Activated CD4-positive, alpha-beta memory T cell treated with anti-CD3 and anti-CD28 coated beads for 36 hours (primary cell): ENCODE measurements at regions of chr3 and their contacts with region 1.

Region 1: DNA sequence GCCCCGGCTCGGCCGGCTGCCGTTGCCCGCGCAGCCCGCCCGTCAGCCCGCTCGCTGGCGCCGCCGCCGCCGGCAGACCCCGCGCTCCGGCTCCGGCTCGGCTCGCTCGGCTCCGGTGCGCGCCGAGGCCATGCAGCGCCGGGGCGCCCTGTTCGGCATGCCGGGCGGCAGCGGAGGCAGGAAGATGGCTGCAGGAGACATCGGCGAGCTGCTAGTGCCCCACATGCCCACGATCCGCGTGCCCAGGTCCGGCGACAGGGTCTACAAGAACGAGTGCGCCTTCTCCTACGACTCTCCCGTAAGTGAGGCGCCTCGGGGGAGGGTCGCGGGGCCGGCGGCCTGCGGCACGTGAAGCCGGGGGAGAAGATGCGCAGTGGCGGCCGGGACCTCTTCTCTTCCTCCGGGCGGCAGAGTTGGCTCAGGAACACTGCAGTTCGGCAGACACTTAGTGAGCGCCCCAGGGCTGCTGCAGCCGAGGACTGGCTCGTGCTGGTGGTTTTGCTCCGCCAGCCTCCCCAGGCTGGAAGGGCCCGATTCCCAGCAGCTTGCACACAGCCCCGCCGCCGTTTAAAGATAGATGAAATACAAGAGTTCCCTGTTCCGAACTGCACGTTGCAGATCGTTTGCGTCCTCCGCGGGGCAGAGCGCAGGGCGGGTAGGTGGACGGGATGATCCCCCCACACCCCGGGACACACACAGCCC is 407 bp downstream of the USP13 start:
- DNase-seq: peak; percentile 73
- H3K4me3 Mint-ChIP-seq: peak overlapping the region; percentile 90
- H3K27ac Mint-ChIP-seq: peak overlapping the region; percentile 71
- H3K4me1 Mint-ChIP-seq: peaks cover 27% of the 10 kb centered on the region
- H3K27me3 Mint-ChIP-seq: peaks cover 1% of the 10 kb centered on the region

Region 2: GRCh38 chr3:179604321-179605078 is 48.7 kb before region 1 on chr3 and contains the starts of genes MRPL47 and NDUFB5:
- CTCF ChIA-PET with region 1: interaction called, 7 read pairs
- POLR2A ChIA-PET with region 1: interaction called, 4 read pairs
- intact Hi-C with region 1: loop called (anchors 1 kb)
- DNase-seq: peak; percentile 96
- H3K4me3 Mint-ChIP-seq: peak within 1 kb of the TSS; percentile 99
- H3K27ac Mint-ChIP-seq: peak within 1 kb of the TSS; percentile 98
- H3K4me1 Mint-ChIP-seq: peaks cover 40% of the 10 kb centered on the region
- H3K27me3 Mint-ChIP-seq: no peaks in the 10 kb centered on the region
- total RNA-seq, gene MRPL47: 51.4 to 54.0 TPM
- total RNA-seq, gene NDUFB5: 133 to 147 TPM

Region 3: DNA sequence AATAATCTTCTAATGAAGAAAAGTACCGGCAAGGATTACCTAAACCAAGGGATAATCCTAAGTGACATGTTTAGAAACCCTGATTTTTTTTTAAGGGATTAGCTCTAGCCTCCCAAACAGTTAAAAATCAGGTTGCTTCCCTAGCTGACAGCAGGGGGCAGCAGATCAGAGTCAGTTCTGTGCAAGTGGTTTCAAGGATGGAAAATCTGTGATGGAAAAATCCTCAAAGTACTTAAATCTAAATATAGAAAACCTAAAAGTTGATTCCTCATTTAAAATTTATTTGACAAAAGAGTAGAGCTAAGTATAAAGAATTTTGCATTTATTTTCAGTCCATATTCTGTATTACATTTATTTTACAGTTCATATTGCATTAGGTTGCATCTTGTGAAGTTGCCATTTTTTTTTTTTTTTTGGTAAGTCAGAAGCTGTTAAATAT is 275.9 kb after region 1 on chr3:
- CTCF ChIA-PET with region 1: no interaction called
- POLR2A ChIA-PET with region 1: no interaction called
- intact Hi-C with region 1: loop called (anchors 10 kb)
- DNase-seq: peak; percentile 54
- H3K4me3 Mint-ChIP-seq: no peak overlapping the region
- H3K27ac Mint-ChIP-seq: no peak overlapping the region
- H3K4me1 Mint-ChIP-seq: peaks cover 1% of the 10 kb centered on the region
- H3K27me3 Mint-ChIP-seq: peaks cover 7% of the 10 kb centered on the region

Region 4: GRCh38 chr3:179967622-179968021 is 314.4 kb after region 1 on chr3:
- CTCF ChIA-PET with region 1: no interaction called
- POLR2A ChIA-PET with region 1: no interaction called
- intact Hi-C with region 1: loop called (anchors 2 kb)
- DNase-seq: peak; percentile 35
- H3K4me3 Mint-ChIP-seq: no peak overlapping the region
- H3K27ac Mint-ChIP-seq: no peak overlapping the region
- H3K4me1 Mint-ChIP-seq: peaks cover 8% of the 10 kb centered on the region
- H3K27me3 Mint-ChIP-seq: peaks cover 14% of the 10 kb centered on the region

Region 5: GRCh38 chr3:180912304-180913296 is 1259.4 kb after region 1 on chr3 and contains the start of gene FXR1:
- CTCF ChIA-PET with region 1: no interaction called
- POLR2A ChIA-PET with region 1: no interaction called
- intact Hi-C with region 1: loop called (anchors 1 kb)
- DNase-seq: peak; percentile 96
- H3K4me3 Mint-ChIP-seq: peak within 1 kb of the TSS; percentile 94
- H3K27ac Mint-ChIP-seq: peak within 1 kb of the TSS; percentile 97
- H3K4me1 Mint-ChIP-seq: peaks cover 51% of the 10 kb centered on the region
- H3K27me3 Mint-ChIP-seq: no peaks in the 10 kb centered on the region
- total RNA-seq, gene FXR1: 165 to 169 TPM

Region 6: GRCh38 chr3:180989291-180990163 is 1336.3 kb after region 1 on chr3 and contains the start of gene DNAJC19:
- CTCF ChIA-PET with region 1: no interaction called
- POLR2A ChIA-PET with region 1: no interaction called
- intact Hi-C with region 1: loop called (anchors 2 kb)
- DNase-seq: peak; percentile 95
- H3K4me3 Mint-ChIP-seq: peak within 1 kb of the TSS; percentile 94
- H3K27ac Mint-ChIP-seq: peak within 1 kb of the TSS; percentile 93
- H3K4me1 Mint-ChIP-seq: peaks cover 31% of the 10 kb centered on the region
- H3K27me3 Mint-ChIP-seq: no peaks in the 10 kb centered on the region
- total RNA-seq, gene DNAJC19: 68.6 to 75.0 TPM